ENCODE measurements at regions of chr2 and their contacts with region 1.

Region 1: GRCh38 chr2:8681786-8682692 is at the start of gene ID2:
- DNase-seq: peak; percentile 99
- ATAC-seq: peak; percentile 44
- H3K4me3 ChIP-seq: peak within 1 kb of the TSS; percentile 73 to 100 (median 100)
- H3K27ac ChIP-seq: peak within 1 kb of the TSS; percentile 100
- H3K4me1 ChIP-seq: peaks cover 28% of the 10 kb centered on the region
- H3K27me3 ChIP-seq: peaks cover 0 to 8% of the 10 kb centered on the region in 2 experiments; a peak in 1 of 5 replicates
- CTCF ChIP-seq: peak; percentile 29; the same call in 1 of the 2 replicates
- EP300 ChIP-seq: peak in 1 of 2 experiments; percentile 51; a peak in 1 of 4 replicates
- POLR2A ChIP-seq: peak in 1 of 2 experiments; percentile 100; a peak in 2 of 4 replicates
- RAD21 ChIP-seq: peak; percentile 94
- total RNA-seq, gene ID2: 214 and 258 TPM in 2 replicates

Region 2: GRCh38 chr2:7118606-7119503 is 1563.2 kb before region 1 on chr2:
- CTCF ChIA-PET with region 1: no interaction called
- POLR2A ChIA-PET with region 1: no interaction called
- in situ Hi-C with region 1: no loop called
- intact Hi-C with region 1: loop called (anchors 5 kb)
- DNase-seq: no peak
- ATAC-seq: peak; percentile 87
- H3K4me3 ChIP-seq: no peak overlapping the region
- H3K27ac ChIP-seq: no peak overlapping the region
- H3K4me1 ChIP-seq: no peaks in the 10 kb centered on the region
- H3K27me3 ChIP-seq: no peaks in the 10 kb centered on the region
- CTCF ChIP-seq: peak; percentile 65
- EP300 ChIP-seq: no peak
- POLR2A ChIP-seq: no peak
- RAD21 ChIP-seq: peak; percentile 10; the same call in 1 of the 2 replicates

Region 3: GRCh38 chr2:8119782-8120505 is 562.1 kb before region 1 on chr2:
- CTCF ChIA-PET with region 1: no interaction called
- POLR2A ChIA-PET with region 1: interaction called, 9 read pairs
- in situ Hi-C with region 1: no loop called
- intact Hi-C with region 1: loop called (anchors 1 kb)
- DNase-seq: peak; percentile 99
- ATAC-seq: peak; percentile 93
- H3K4me3 ChIP-seq: peak overlapping the region; percentile 15 to 53 (median 25); a peak in 4 of 6 replicates
- H3K27ac ChIP-seq: peak overlapping the region; percentile 96
- H3K4me1 ChIP-seq: peaks cover 98% of the 10 kb centered on the region
- H3K27me3 ChIP-seq: no peaks in the 10 kb centered on the region
- CTCF ChIP-seq: no peak
- EP300 ChIP-seq: peak; percentile 32 to 97
- POLR2A ChIP-seq: peak; percentile 64 to 84
- RAD21 ChIP-seq: no peak

Region 4: GRCh38 chr2:8432706-8433336 is 249.2 kb before region 1 on chr2:
- CTCF ChIA-PET with region 1: no interaction called
- POLR2A ChIA-PET with region 1: no interaction called
- in situ Hi-C with region 1: no loop called
- intact Hi-C with region 1: loop called (anchors 5 kb)
- DNase-seq: no peak
- ATAC-seq: no peak
- H3K4me3 ChIP-seq: no peak overlapping the region
- H3K27ac ChIP-seq: no peak overlapping the region
- H3K4me1 ChIP-seq: no peaks in the 10 kb centered on the region
- H3K27me3 ChIP-seq: no peaks in the 10 kb centered on the region
- CTCF ChIP-seq: no peak
- EP300 ChIP-seq: no peak
- POLR2A ChIP-seq: no peak
- RAD21 ChIP-seq: no peak

Region 5: GRCh38 chr2:8445580-8445979 is 236.5 kb before region 1 on chr2:
- CTCF ChIA-PET with region 1: no interaction called
- POLR2A ChIA-PET with region 1: no interaction called
- in situ Hi-C with region 1: no loop called
- intact Hi-C with region 1: no loop called
- DNase-seq: no peak
- ATAC-seq: no peak
- H3K4me3 ChIP-seq: no peak overlapping the region
- H3K27ac ChIP-seq: no peak overlapping the region
- H3K4me1 ChIP-seq: no peaks in the 10 kb centered on the region
- H3K27me3 ChIP-seq: 0 out of 5 replicates have a peak, but pooled peaks cover 0 to 2% of the 10 kb centered on the region in 2 experiments
- CTCF ChIP-seq: no peak
- EP300 ChIP-seq: no peak
- POLR2A ChIP-seq: no peak
- RAD21 ChIP-seq: no peak

Region 6: DNA sequence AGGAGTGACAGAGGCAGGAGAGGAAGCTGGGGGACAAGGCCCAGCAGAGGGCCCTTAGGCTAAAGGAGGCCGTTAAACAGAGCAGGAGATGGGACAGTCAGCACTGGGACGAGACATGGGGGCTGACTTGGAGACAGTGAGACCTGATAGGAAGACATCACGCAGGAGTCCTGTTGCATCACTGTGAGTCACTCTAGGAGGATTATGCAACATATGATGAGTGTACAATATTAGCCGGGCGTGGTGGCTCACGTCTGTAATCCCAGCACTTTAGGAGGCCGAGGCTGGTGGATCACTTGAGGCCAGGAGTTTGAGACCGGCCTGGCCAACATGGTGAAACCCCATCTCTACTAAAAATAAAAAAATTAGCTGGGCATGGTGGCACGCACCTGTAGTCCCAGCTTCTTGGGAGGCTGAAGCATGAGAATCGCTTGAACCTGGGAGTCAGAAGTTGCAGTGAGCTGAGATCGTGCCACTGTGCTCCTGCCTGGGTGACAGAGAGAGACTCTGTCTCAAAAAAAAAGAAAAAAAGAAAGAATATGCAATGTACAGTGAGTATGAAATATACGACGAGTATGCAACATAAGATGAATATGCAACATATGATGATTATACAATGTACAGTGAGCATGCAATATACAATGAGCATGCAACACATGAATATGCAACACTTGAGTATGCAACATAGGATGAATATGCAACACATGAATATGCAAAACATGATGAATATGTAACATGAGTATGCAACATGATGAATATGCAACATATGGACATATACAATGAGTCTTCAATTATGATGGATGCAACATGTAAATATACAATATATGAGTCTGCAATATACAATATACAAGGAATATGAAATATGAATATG is 83.5 kb before region 1 on chr2:
- CTCF ChIA-PET with region 1: no interaction called
- POLR2A ChIA-PET with region 1: interaction called, 31 read pairs
- in situ Hi-C with region 1: no loop called
- intact Hi-C with region 1: no loop called
- DNase-seq: peak; percentile 65
- ATAC-seq: peak; percentile 41
- H3K4me3 ChIP-seq: no peak overlapping the region
- H3K27ac ChIP-seq: no peak overlapping the region
- H3K4me1 ChIP-seq: peaks cover 51% of the 10 kb centered on the region
- H3K27me3 ChIP-seq: no peaks in the 10 kb centered on the region
- CTCF ChIP-seq: 0 out of 2 replicates have a peak, but pooled peaks have one; percentile 12
- EP300 ChIP-seq: no peak; a peak in 1 of 4 replicates
- POLR2A ChIP-seq: no peak
- RAD21 ChIP-seq: no peak

Region 7: GRCh38 chr2:8633735-8634313 is 48.2 kb before region 1 on chr2:
- CTCF ChIA-PET with region 1: interaction called, 3 read pairs
- POLR2A ChIA-PET with region 1: interaction called, 354 read pairs
- in situ Hi-C with region 1: loop called (anchors 5 kb)
- intact Hi-C with region 1: loop called (anchors 1 kb)
- DNase-seq: peak; percentile 98
- ATAC-seq: peak; percentile 88
- H3K4me3 ChIP-seq: peak overlapping the region in 1 of 3 experiments; percentile 44; a peak in 2 of 6 replicates
- H3K27ac ChIP-seq: peak overlapping the region; percentile 55
- H3K4me1 ChIP-seq: peaks cover 98% of the 10 kb centered on the region
- H3K27me3 ChIP-seq: no peaks in the 10 kb centered on the region
- CTCF ChIP-seq: no peak
- EP300 ChIP-seq: peak; percentile 61 to 95; a peak in 3 of 4 replicates
- POLR2A ChIP-seq: peak in 1 of 2 experiments; percentile 40; a peak in 2 of 4 replicates
- RAD21 ChIP-seq: peak; percentile 31; the same call in 1 of the 2 replicates

Region 8: DNA sequence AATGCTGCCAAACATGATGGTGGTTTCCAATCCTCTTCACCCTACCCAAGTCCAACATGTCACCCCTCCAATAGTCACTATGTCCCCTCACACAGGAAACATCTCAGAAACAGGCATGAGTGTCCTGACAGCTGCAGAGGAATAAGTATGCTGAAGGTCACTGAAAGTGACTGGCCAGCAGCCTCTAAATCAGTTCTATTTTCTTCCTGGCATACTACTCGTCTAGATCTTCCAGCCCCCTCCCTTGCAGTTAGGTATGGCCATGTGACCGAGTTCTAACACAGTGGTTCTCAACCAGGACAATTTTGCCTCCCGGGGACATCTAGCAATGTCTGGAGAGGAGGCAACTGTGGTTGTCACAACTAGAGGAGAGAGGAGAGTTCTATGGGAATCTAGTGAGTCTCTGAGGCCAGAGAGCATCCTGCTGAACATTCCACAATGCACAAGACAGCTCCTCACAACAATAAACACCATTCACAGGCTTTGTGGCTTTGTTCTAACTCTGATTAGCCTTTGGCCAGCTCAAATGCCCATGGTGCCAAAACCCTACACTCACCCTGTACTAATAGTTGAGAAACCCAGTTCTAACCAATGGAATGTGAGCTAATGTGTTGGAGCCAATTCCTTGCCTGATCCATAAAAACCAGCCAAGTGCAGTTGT is 12.8 kb before region 1 on chr2:
- CTCF ChIA-PET with region 1: no interaction called
- POLR2A ChIA-PET with region 1: interaction called, 49 read pairs
- in situ Hi-C with region 1: no loop called
- intact Hi-C with region 1: no loop called
- DNase-seq: no peak
- ATAC-seq: peak; percentile 64
- H3K4me3 ChIP-seq: no peak overlapping the region
- H3K27ac ChIP-seq: no peak overlapping the region
- H3K4me1 ChIP-seq: peaks cover 15% of the 10 kb centered on the region
- H3K27me3 ChIP-seq: no peaks in the 10 kb centered on the region
- CTCF ChIP-seq: no peak
- EP300 ChIP-seq: no peak
- POLR2A ChIP-seq: no peak
- RAD21 ChIP-seq: no peak

Measured in HepG2 (cell line).